Calu3 (cell line): ENCODE measurements at regions of chr18 and their contacts with region 1.

Region 1: DNA sequence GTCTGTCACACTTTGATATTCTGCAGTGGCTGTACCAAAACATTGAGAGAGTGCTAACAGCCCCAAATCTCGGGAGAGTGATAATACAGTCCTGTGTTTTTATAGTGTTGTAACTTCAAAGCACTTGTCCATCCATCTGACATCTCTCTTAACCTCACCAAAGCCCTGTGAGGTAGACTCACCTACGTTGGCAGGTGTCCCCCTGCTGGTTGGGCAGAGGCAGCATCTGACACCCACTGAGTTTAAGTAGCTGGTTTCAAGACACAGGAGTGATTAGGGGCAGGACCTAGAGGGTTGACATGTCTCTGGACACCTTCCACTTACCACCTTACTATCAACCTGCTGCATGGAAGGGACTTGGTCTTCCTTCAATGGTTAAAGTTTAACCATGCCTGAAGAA is 22.9 kb downstream of the COLEC12 start:
- DNase-seq: peak; percentile 66
- H3K4me3 Mint-ChIP-seq: no peak overlapping the region
- H3K27ac Mint-ChIP-seq: no peak overlapping the region
- H3K4me1 Mint-ChIP-seq: peaks cover 20% of the 10 kb centered on the region
- H3K27me3 Mint-ChIP-seq: peaks cover 17% of the 10 kb centered on the region
- CTCF ChIP-seq: peak; percentile 68

Region 2: GRCh38 chr18:210663-211179 is 266.8 kb before region 1 on chr18:
- CTCF ChIA-PET with region 1: no interaction called
- intact Hi-C with region 1: no loop called
- DNase-seq: no peak
- H3K4me3 Mint-ChIP-seq: no peak overlapping the region
- H3K27ac Mint-ChIP-seq: no peak overlapping the region
- H3K4me1 Mint-ChIP-seq: peaks cover under 1% of the 10 kb centered on the region
- H3K27me3 Mint-ChIP-seq: no peaks in the 10 kb centered on the region
- CTCF ChIP-seq: no peak

Region 3: GRCh38 chr18:427005-427404 is 50.6 kb before region 1 on chr18:
- CTCF ChIA-PET with region 1: no interaction called
- intact Hi-C with region 1: loop called (anchors 10 kb)
- DNase-seq: no peak
- H3K4me3 Mint-ChIP-seq: no peak overlapping the region
- H3K27ac Mint-ChIP-seq: no peak overlapping the region
- H3K4me1 Mint-ChIP-seq: peaks cover 3% of the 10 kb centered on the region
- H3K27me3 Mint-ChIP-seq: peaks cover 12% of the 10 kb centered on the region
- CTCF ChIP-seq: no peak

Region 4: DNA sequence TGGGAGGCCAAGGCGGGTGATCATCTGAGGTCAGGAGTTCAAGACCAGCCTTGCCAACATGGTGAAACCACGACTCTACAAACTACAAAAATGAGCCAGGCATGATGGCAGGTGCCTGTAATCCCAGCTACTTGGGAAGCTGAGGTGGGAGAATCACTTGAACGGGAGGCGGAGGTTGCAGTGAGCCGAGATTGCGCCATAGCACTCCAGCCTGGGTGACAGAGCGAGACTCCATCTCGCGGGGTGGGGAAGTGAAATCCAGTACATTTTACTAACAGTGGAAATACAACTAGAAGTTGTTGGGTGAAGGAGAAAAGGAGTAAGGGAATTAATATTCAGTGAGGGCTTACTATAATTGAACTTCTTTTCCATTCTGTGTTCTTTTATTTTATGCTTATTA is 248.1 kb after region 1 on chr18:
- CTCF ChIA-PET with region 1: no interaction called
- intact Hi-C with region 1: no loop called
- DNase-seq: no peak
- H3K4me3 Mint-ChIP-seq: no peak overlapping the region
- H3K27ac Mint-ChIP-seq: no peak overlapping the region
- H3K4me1 Mint-ChIP-seq: no peaks in the 10 kb centered on the region
- H3K27me3 Mint-ChIP-seq: no peaks in the 10 kb centered on the region
- CTCF ChIP-seq: no peak

Region 5: GRCh38 chr18:830315-830901 is 352.8 kb after region 1 on chr18:
- CTCF ChIA-PET with region 1: no interaction called
- intact Hi-C with region 1: no loop called
- DNase-seq: no peak
- H3K4me3 Mint-ChIP-seq: no peak overlapping the region
- H3K27ac Mint-ChIP-seq: no peak overlapping the region
- H3K4me1 Mint-ChIP-seq: peaks cover 22% of the 10 kb centered on the region
- H3K27me3 Mint-ChIP-seq: peaks cover 13% of the 10 kb centered on the region
- CTCF ChIP-seq: no peak